Mammary epithelial cell (primary cell): ENCODE measurements at regions of chr19 and their contacts with region 1.

Region 1: GRCh38 chr19:40055832-40056504 is at the start of gene ZNF780B:
- DNase-seq: peak; percentile 55
- H3K4me3 ChIP-seq: peak within 1 kb of the TSS; percentile 70 to 87 (median 71)
- H3K27ac ChIP-seq: peak within 1 kb of the TSS; percentile 9
- H3K4me1 ChIP-seq: no peaks in the 10 kb centered on the region
- H3K27me3 ChIP-seq: no peaks in the 10 kb centered on the region
- CTCF ChIP-seq: no peak
- total RNA-seq, gene ZNF780B: 11.0 to 11.1 TPM

Region 2: GRCh38 chr19:39941615-39942365 is 114.2 kb before region 1 on chr19:
- CTCF ChIA-PET with region 1: no interaction called
- dilution Hi-C with region 1: loop called (anchors 25 kb)
- in situ Hi-C with region 1: no loop called
- intact Hi-C with region 1: no loop called
- DNase-seq: peak; percentile 55
- H3K4me3 ChIP-seq: no peak overlapping the region
- H3K27ac ChIP-seq: no peak overlapping the region
- H3K4me1 ChIP-seq: peaks cover 9% of the 10 kb centered on the region
- H3K27me3 ChIP-seq: no peaks in the 10 kb centered on the region
- CTCF ChIP-seq: no peak

Region 3: GRCh38 chr19:39970675-39971379 is 85.1 kb before region 1 on chr19 and contains the start of gene PSMC4:
- CTCF ChIA-PET with region 1: no interaction called
- dilution Hi-C with region 1: no loop called
- in situ Hi-C with region 1: no loop called
- intact Hi-C with region 1: loop called (anchors 5 kb)
- DNase-seq: peak; percentile 99
- H3K4me3 ChIP-seq: peak within 1 kb of the TSS; percentile 76 to 89 (median 82)
- H3K27ac ChIP-seq: peak within 1 kb of the TSS; percentile 83
- H3K4me1 ChIP-seq: peaks cover 13% of the 10 kb centered on the region
- H3K27me3 ChIP-seq: no peaks in the 10 kb centered on the region
- CTCF ChIP-seq: peak; percentile 60 to 87
- total RNA-seq, gene PSMC4: 85.9 to 100 TPM